Cardiac septum (tissue), 1 donor: ENCODE measurements at regions of chr15 and their contacts with region 1.

Region 1: DNA sequence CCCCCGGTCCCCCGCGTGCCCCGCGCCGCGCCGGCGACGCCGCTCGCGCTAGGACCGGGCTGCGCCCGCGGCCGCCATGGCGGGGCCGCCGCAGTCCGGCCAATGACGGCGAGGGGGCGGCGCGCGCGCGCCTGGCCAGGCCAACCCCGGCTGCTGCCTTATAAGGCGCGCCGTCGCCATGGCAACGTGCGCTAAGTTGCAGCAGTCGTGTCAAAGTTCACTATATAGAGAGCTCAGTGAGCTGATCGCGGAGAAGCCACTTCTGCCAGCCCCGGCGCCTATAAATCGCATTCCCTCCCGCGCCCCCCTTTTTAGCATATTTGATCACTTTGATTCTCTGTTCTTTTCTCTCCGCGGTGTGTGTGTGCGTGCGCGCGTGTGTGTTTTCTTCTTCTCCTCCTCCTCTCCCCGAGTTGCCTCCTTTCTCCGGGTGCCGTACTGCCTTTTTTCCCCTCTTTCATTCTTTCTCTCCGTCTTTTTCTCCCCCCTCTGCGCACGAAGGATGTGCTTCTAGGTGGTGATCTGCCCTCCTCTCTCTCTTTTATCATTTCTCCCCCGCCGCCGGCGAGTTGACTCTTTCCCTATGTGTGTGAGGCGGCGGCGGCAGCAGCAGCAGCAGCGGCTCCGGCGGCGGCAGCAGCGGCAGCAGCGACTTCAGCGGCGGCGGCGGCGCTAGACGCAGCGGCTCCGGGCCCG is at the start of gene NR2F2:
- DNase-seq: peak; percentile 93
- total RNA-seq, gene NR2F2: 21.0 TPM

Region 2: GRCh38 chr15:95132774-95133173 is 1197.8 kb before region 1 on chr15:
- intact Hi-C with region 1: loop called (anchors 10 kb)
- DNase-seq: no peak

Region 3: DNA sequence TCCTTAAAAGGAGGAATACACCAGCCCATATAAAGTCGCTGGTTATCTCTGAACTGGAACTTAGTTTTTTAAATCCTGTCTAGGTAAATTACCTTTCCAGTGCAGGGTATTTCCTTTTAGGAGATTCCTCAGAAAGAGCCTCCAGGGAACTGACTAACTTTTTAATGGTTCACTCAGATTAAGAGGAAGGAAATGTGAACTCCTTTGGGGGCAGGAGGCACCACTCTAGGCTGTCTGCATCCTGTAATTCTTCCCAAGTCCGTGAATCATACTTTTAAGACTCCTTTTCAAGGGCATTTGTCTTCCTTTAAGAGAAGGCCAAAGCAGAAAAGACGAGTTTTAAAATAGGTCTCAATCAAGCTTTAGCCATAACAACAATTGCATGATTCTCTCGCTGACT is 871.3 kb before region 1 on chr15:
- intact Hi-C with region 1: loop called (anchors 10 kb)
- DNase-seq: no peak

Region 4: GRCh38 chr15:95604634-95605036 is 726.0 kb before region 1 on chr15:
- intact Hi-C with region 1: loop called (anchors 10 kb)
- DNase-seq: no peak

Region 5: GRCh38 chr15:95843241-95843910 is 487.2 kb before region 1 on chr15:
- intact Hi-C with region 1: loop called (anchors 10 kb)
- DNase-seq: no peak

Region 6: GRCh38 chr15:96477227-96477626 is 146.6 kb after region 1 on chr15:
- intact Hi-C with region 1: no loop called
- DNase-seq: no peak